IMR-90 (cell line): ENCODE measurements at regions of chr6 and their contacts with region 1.

Region 1: GRCh38 chr6:19851241-19852089 is 14.3 kb downstream of the ID4 start:
- DNase-seq: peak; percentile 84
- ATAC-seq: peak; percentile 99
- H3K4me3 ChIP-seq: no peak overlapping the region
- H3K27ac ChIP-seq: no peak overlapping the region
- H3K4me1 ChIP-seq: peaks cover 6% of the 10 kb centered on the region
- H3K27me3 ChIP-seq: no peaks in the 10 kb centered on the region
- CTCF ChIP-seq: peak; percentile 98
- POLR2A ChIP-seq: 0 out of 2 replicates have a peak, but pooled peaks have one; percentile 53
- RAD21 ChIP-seq: peak; percentile 99

Region 2: DNA sequence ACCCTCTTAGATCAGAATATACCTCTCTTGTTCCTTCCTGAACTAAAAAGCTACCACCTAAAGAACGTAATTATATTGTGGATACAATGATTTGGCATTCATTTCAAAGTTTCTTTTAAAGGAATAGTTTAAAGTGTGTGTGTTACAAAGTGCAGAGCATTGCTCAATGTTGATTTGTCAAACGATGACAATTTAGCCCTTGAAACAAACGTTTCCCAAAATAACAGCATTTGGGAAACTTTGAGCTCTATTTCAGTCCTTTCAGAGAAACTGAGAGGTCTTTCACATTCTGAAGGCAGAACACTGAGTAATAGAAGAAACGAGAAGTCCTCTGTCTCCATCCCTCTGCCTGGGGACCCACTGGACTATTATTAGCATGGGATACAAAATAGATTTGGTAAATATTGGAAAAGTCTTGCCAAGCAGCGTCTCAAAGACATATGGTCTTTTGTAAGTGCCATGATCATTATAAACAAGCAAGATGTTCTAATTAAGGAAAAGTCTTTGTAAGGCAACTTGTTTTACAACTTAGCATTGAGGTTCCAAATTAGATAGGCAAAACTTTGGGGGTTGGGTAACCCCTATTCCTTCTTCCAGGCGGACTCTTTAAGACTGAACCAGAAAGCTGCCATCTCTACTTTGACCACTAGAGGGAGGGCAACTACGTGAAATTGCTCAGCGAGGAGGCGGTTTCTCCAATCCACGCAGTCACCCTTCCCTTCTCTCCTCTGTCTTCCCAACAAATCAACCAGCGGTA is 1255.5 kb before region 1 on chr6:
- CTCF ChIA-PET with region 1: no interaction called
- POLR2A ChIA-PET with region 1: no interaction called
- dilution Hi-C with region 1: no loop called
- in situ Hi-C with region 1: loop called (anchors 25 kb)
- intact Hi-C with region 1: loop called (anchors 1 kb)
- DNase-seq: peak; percentile 63
- ATAC-seq: peak; percentile 99
- H3K4me3 ChIP-seq: no peak overlapping the region
- H3K27ac ChIP-seq: no peak overlapping the region
- H3K4me1 ChIP-seq: no peaks in the 10 kb centered on the region
- H3K27me3 ChIP-seq: no peaks in the 10 kb centered on the region; the same call in 1 of the 2 replicates
- CTCF ChIP-seq: peak; percentile 89
- POLR2A ChIP-seq: no peak
- RAD21 ChIP-seq: peak; percentile 82

Region 3: DNA sequence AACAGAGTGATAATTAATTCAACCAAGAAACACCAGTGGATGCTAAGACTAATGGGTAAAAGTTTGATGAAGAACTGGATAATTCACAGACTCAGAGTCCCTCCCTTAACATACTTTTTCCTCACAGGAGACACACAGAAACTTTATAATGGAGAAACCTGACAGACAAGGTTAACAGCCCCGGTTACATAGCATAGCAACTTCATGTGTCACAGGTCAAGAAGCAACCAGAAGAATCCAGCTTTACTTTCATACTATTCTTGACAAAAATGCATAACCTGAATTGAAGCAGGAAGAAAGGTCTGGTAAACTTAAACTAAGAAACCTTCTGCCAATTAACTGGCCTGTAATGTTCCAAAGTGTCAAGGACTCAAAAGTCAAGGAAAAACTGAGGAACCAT is 1088.4 kb before region 1 on chr6:
- CTCF ChIA-PET with region 1: no interaction called
- POLR2A ChIA-PET with region 1: no interaction called
- dilution Hi-C with region 1: no loop called
- in situ Hi-C with region 1: loop called (anchors 25 kb)
- intact Hi-C with region 1: no loop called
- DNase-seq: no peak
- ATAC-seq: no peak
- H3K4me3 ChIP-seq: no peak overlapping the region
- H3K27ac ChIP-seq: no peak overlapping the region
- H3K4me1 ChIP-seq: no peaks in the 10 kb centered on the region
- H3K27me3 ChIP-seq: no peaks in the 10 kb centered on the region
- CTCF ChIP-seq: no peak
- POLR2A ChIP-seq: no peak
- RAD21 ChIP-seq: no peak

Region 4: DNA sequence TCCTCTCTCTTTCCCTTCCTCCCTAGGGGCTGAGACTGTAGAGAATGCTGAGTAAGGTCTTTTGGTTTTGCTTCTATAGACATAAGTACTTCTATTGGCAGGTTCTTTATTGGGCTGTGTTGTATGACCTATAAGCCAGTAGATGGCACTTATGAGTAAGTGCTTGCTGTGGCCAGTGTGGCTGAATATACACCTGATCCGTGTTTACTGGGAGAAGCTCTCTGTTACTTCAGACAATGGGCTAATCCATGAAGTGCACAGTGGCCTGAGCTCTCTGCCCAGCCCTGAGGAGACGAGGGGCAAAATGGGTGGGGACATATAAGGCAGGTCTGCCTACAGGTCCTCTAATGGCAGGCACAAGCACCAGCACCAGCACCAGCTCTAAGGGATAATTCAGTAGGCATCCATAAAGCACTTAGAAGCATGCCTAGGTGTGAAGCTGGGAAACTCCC is 854.1 kb before region 1 on chr6:
- CTCF ChIA-PET with region 1: no interaction called
- POLR2A ChIA-PET with region 1: no interaction called
- dilution Hi-C with region 1: no loop called
- in situ Hi-C with region 1: loop called (anchors 25 kb)
- intact Hi-C with region 1: loop called (anchors 2 kb)
- DNase-seq: peak; percentile 41
- ATAC-seq: peak; percentile 54; the same call in 1 of the 2 replicates
- H3K4me3 ChIP-seq: no peak overlapping the region
- H3K27ac ChIP-seq: no peak overlapping the region
- H3K4me1 ChIP-seq: no peaks in the 10 kb centered on the region
- H3K27me3 ChIP-seq: no peaks in the 10 kb centered on the region
- CTCF ChIP-seq: peak; percentile 53
- POLR2A ChIP-seq: no peak
- RAD21 ChIP-seq: peak; percentile 52

Region 5: DNA sequence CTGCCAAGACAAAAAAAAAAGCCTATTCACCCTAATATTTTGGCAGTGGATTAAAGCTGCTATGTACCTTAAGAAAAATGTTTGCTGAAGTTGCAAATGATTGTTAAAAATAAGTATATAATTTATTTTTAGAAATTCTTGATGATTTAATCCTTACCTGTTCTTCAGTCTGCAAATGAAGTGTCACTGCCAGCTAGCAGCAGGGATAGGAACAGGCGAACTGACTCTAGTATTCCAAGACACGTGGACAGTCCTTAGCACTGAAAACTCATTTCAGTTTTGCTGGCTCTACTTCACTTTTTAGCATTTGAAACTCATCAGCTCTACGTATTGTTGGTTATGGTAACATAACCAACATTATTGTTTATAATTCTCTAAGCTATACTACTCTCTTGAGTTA is 218.7 kb before region 1 on chr6:
- CTCF ChIA-PET with region 1: no interaction called
- POLR2A ChIA-PET with region 1: no interaction called
- dilution Hi-C with region 1: no loop called
- in situ Hi-C with region 1: no loop called
- intact Hi-C with region 1: no loop called
- DNase-seq: no peak
- ATAC-seq: no peak
- H3K4me3 ChIP-seq: no peak overlapping the region
- H3K27ac ChIP-seq: no peak overlapping the region
- H3K4me1 ChIP-seq: no peaks in the 10 kb centered on the region
- H3K27me3 ChIP-seq: no peaks in the 10 kb centered on the region
- CTCF ChIP-seq: no peak
- POLR2A ChIP-seq: no peak
- RAD21 ChIP-seq: no peak

Region 6: GRCh38 chr6:20056350-20056992 is 205.0 kb after region 1 on chr6:
- CTCF ChIA-PET with region 1: no interaction called
- POLR2A ChIA-PET with region 1: no interaction called
- dilution Hi-C with region 1: no loop called
- in situ Hi-C with region 1: no loop called
- intact Hi-C with region 1: loop called (anchors 10 kb)
- DNase-seq: peak; percentile 63
- ATAC-seq: peak; percentile 61; the same call in 1 of the 2 replicates
- H3K4me3 ChIP-seq: no peak overlapping the region
- H3K27ac ChIP-seq: no peak overlapping the region
- H3K4me1 ChIP-seq: no peaks in the 10 kb centered on the region
- H3K27me3 ChIP-seq: no peaks in the 10 kb centered on the region; the same call in 1 of the 2 replicates
- CTCF ChIP-seq: peak; percentile 74
- POLR2A ChIP-seq: no peak
- RAD21 ChIP-seq: peak; percentile 72